Heart left ventricle (tissue), 16 donors: ENCODE measurements at regions of chr5 and their contacts with region 1.

Region 1: GRCh38 chr5:129767906-129768380 is 20.0 kb downstream of the MINAR2 start:
- DNase-seq: peak in 4 of 5 donors; percentile 35 to 56 (median 52)
- ATAC-seq: peak; percentile 80 to 93 (median 89)
- H3K4me3 ChIP-seq: no peak overlapping the region
- H3K27ac ChIP-seq: no peak overlapping the region
- H3K4me1 ChIP-seq: no peaks in the 10 kb centered on the region
- H3K27me3 ChIP-seq: no peaks in the 10 kb centered on the region
- CTCF ChIP-seq: peak; percentile 92 to 99 (median 96)
- POLR2A ChIP-seq: no peak

Region 2: DNA sequence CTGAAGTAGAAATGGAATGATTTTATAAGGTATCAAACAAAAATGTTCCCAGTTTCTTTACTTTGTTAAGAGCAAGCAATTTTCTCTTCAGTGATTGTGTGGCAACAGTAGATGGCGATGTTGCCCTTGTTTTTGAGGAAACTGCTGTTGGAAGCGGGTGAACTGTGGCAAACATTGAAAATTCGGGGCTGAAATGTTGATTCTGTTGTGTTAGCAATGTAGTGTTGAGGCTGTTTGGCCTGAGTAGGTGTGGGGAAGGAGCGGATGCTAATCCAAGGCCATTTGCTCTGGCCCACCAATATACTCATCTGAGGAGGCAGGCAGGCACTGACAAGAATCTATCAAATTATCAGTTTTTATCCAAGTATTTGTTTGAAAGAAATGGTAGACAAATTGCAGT is 1554.6 kb before region 1 on chr5:
- intact Hi-C with region 1: loop called in 3 of 10 experiments (anchors 5 to 10 kb)
- DNase-seq: peak in 4 of 5 donors; percentile 27 to 47 (median 36)
- ATAC-seq: peak in 2 of 4 donors; percentile 4 to 41
- H3K4me3 ChIP-seq: no peak overlapping the region
- H3K27ac ChIP-seq: no peak overlapping the region
- H3K4me1 ChIP-seq: peaks cover 0 to 11% (median 3%) of the 10 kb centered on the region in 12 donors
- H3K27me3 ChIP-seq: no peaks in the 10 kb centered on the region
- CTCF ChIP-seq: peak; percentile 59 to 88 (median 77)
- POLR2A ChIP-seq: no peak

Region 3: GRCh38 chr5:129172580-129172979 is 595.4 kb before region 1 on chr5:
- intact Hi-C with region 1: loop called (anchors 1 to 10 kb)
- DNase-seq: no peak
- ATAC-seq: peak in 2 of 4 donors; percentile 31 to 51
- H3K4me3 ChIP-seq: no peak overlapping the region
- H3K27ac ChIP-seq: no peak overlapping the region
- H3K4me1 ChIP-seq: no peaks in the 10 kb centered on the region
- H3K27me3 ChIP-seq: no peaks in the 10 kb centered on the region
- CTCF ChIP-seq: peak in 7 of 12 donors; percentile 12 to 38 (median 32)
- POLR2A ChIP-seq: no peak

Region 4: DNA sequence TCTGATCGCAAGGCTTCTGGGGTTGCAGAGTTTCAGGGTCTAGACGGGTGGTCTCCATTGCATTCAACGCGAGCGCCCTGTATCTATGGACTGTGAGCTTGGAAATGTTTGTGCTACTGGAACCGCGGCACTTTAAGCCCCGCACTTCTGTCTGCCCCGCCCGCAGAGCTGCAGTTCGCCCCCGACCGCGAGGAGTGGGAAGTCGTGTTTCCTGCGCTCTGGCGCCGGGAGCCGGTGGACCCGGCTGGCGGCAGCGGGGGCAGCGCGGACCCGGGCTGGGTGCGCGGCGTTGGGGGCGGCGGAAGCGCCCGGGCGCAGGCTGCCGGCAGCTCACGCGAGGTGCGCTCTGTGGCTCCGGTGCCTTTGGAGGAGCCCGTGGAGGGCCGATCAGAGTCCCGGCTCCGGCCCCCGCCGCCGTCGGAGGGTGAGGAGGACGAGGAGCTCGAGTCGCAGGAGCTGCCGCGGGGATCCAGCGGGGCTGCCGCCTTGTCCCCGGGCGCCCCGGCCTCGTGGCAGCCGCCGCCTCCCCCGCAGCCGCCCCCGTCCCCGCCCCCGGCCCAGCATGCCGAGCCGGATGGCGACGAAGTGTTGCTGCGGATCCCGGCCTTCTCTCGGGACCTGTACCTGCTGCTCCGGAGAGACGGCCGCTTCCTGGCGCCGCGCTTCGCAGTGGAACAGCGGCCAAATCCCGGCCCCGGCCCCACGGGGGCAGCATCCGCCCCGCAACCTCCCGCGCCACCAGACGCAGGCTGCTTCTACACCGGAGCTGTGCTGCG is 306.8 kb before region 1 on chr5:
- intact Hi-C with region 1: loop called in 1 of 10 experiments (anchors 10 kb)
- DNase-seq: peak; percentile 13 to 69 (median 38)
- ATAC-seq: peak in 3 of 4 donors; percentile 58 to 67 (median 66)
- H3K4me3 ChIP-seq: peak overlapping the region; percentile 34 to 63 (median 54)
- H3K27ac ChIP-seq: peak overlapping the region in 3 of 12 donors; percentile 22 to 41 (median 39)
- H3K4me1 ChIP-seq: peaks cover 0 to 22% (median 0%) of the 10 kb centered on the region in 12 donors
- H3K27me3 ChIP-seq: peaks cover 5 to 45% (median 13%) of the 10 kb centered on the region in 9 donors
- CTCF ChIP-seq: peak in 7 of 12 donors; percentile 15 to 43 (median 24)
- POLR2A ChIP-seq: no peak

Region 5: GRCh38 chr5:129852747-129853352 is 84.9 kb after region 1 on chr5:
- intact Hi-C with region 1: loop called in 9 of 10 experiments (anchors 1 to 5 kb)
- DNase-seq: peak; percentile 55 to 82 (median 66)
- ATAC-seq: peak in 3 of 4 donors; percentile 72 to 78 (median 74)
- H3K4me3 ChIP-seq: no peak overlapping the region
- H3K27ac ChIP-seq: no peak overlapping the region
- H3K4me1 ChIP-seq: peaks cover 0 to 5% (median 0%) of the 10 kb centered on the region in 12 donors
- H3K27me3 ChIP-seq: no peaks in the 10 kb centered on the region
- CTCF ChIP-seq: peak; percentile 78 to 95 (median 90)
- POLR2A ChIP-seq: no peak

Region 6: GRCh38 chr5:131423056-131423455 is 1655.1 kb after region 1 on chr5:
- intact Hi-C with region 1: loop called in 1 of 10 experiments (anchors 10 kb)
- DNase-seq: no peak
- ATAC-seq: peak in 1 of 4 donors; percentile 33
- H3K4me3 ChIP-seq: no peak overlapping the region
- H3K27ac ChIP-seq: no peak overlapping the region
- H3K4me1 ChIP-seq: no peaks in the 10 kb centered on the region
- H3K27me3 ChIP-seq: no peaks in the 10 kb centered on the region
- CTCF ChIP-seq: peak; percentile 7 to 55 (median 38)
- POLR2A ChIP-seq: no peak